Panc1 (cell line): ENCODE measurements at regions of chr6 and their contacts with region 1.

Region 1: GRCh38 chr6:43059168-43060033 is at the starts of genes KLC4 and MRPL2:
- DNase-seq: peak; percentile 98
- ATAC-seq: peak; percentile 98
- H3K4me3 ChIP-seq: peak within 1 kb of the TSS; percentile 91 to 97
- H3K27ac ChIP-seq: peak within 1 kb of the TSS; percentile 92
- H3K4me1 ChIP-seq: peaks cover 11% of the 10 kb centered on the region
- H3K27me3 ChIP-seq: no peaks in the 10 kb centered on the region
- CTCF ChIP-seq: no peak
- total RNA-seq, gene KLC4: 22.6 TPM
- total RNA-seq, gene MRPL2: 65.6 TPM

Region 2: DNA sequence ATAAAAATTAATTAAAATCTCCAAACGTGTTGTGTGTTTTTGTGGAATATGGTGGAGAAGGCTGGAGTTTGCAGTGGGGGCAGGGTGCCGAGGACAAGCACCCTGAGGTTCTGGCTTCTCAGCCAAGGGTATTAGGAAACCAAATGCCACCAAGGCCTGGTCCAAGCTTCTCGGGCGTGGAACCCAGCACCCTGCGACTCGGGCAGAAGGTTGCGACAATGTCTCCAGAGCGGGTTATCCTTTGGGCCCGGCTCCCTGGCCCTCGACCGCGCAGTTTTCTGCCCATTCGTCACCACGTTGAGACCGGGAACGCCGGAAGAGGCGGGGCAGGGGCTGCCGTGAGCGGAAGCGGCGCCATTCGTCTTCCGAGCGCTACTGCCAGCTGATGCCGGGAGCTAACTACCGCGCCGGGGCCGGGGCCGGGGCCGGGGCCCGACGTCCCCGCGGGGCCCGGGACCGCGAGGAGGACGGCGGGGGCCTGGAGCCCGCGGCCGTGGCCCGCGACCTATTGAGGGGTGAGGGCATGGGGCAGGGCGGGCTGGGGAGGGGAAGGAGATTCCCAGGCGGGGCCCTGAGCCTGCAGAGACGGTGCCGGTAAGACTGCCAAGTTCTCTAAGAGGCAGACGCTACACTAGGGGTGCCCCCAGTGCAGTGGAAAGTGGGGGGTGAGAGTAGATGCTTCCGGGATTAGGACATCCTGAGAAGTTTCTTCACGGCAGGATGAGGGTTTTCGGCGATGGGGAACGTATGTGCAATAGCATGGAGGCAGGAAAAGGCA is 37.9 kb before region 1 on chr6 and contains the start of gene RRP36:
- CTCF ChIA-PET with region 1: no interaction called
- POLR2A ChIA-PET with region 1: no interaction called
- in situ Hi-C with region 1: no loop called
- intact Hi-C with region 1: no loop called
- DNase-seq: no peak
- ATAC-seq: peak; percentile 96
- H3K4me3 ChIP-seq: peak within 1 kb of the TSS; percentile 63 to 99
- H3K27ac ChIP-seq: peak within 1 kb of the TSS; percentile 89
- H3K4me1 ChIP-seq: peaks cover 14% of the 10 kb centered on the region
- H3K27me3 ChIP-seq: no peaks in the 10 kb centered on the region
- CTCF ChIP-seq: no peak
- total RNA-seq, gene RRP36: 106 TPM

Region 3: DNA sequence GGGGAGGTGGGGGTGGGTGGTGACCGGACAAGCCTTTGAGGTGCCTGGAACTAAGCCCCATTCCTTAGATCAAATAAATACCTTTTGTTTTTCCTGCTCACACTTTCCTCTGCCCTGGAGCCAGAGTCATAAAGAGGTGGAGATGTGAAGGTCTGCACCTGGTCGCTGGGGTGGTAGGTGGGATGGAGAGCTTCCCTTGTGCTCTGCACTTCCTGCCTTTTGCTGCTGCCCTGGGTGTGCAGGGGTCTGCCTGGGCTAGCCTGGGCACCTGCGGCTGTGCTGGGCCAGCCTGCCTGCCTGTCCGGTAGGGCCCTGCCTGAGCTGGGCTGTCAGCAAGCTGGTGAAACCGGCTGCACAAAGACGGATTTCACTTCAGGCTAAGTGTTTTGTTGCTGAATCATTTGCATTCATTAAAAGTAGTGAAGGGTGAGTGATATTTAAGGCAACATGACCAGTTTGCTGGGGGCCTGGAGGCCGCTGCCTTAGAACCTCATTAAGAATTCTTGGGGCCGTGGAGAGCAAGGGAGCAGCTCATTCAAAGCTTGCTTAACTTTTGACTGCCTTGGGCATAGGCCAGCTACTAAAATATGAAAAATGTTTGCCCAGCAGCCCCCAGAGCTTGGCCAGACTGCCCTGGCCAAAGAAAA is 37.2 kb after region 1 on chr6:
- CTCF ChIA-PET with region 1: no interaction called
- POLR2A ChIA-PET with region 1: no interaction called
- in situ Hi-C with region 1: no loop called
- intact Hi-C with region 1: loop called (anchors 2 kb)
- DNase-seq: no peak
- ATAC-seq: peak; percentile 60
- H3K4me3 ChIP-seq: peak overlapping the region; percentile 17 to 38
- H3K27ac ChIP-seq: peak overlapping the region; percentile 97
- H3K4me1 ChIP-seq: peaks cover 68% of the 10 kb centered on the region
- H3K27me3 ChIP-seq: no peaks in the 10 kb centered on the region
- CTCF ChIP-seq: no peak